SK-N-SH (cell line): ENCODE measurements at regions of chr10 and their contacts with region 1.

Region 1: DNA sequence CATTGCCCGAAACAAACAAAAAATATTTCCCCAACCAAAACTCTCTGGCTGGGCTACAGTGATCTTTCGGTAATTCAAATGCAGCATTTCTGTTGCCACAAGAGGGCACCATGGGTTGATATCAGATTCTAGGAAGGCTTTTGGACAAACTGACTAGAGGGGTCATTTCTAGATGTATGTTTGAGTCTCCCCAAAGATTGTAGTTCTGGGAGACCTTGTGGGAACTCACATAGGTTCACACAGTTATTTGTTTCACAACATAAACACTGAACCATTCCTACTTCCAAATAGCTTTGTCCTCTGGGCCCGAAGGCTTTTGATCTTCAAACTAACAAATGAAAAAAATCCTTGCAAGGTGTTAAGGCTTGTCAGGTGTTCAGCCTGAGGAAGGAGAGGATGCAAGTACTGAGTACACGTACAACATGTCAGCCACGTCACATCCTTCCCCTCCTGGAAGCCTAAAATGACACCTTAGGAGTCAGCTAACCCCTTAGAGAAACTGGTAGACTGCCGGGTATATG is 37.0 kb upstream of the IL15RA start:
- DNase-seq: peak; percentile 52
- H3K4me3 ChIP-seq: peak overlapping the region in 1 of 2 experiments; percentile 40; a peak in 1 of 4 replicates
- H3K27ac ChIP-seq: no peak overlapping the region
- H3K4me1 ChIP-seq: no peaks in the 10 kb centered on the region; a peak in 1 of 4 replicates
- H3K27me3 ChIP-seq: no peaks in the 10 kb centered on the region; the same call in 1 of the 2 replicates
- CTCF ChIP-seq: peak; percentile 77
- EP300 ChIP-seq: no peak
- RAD21 ChIP-seq: peak; percentile 57

Region 2: GRCh38 chr10:6027929-6028328 is 13.6 kb after region 1 on chr10:
- CTCF ChIA-PET with region 1: interaction called, 16 read pairs
- POLR2A ChIA-PET with region 1: no interaction called
- DNase-seq: no peak
- H3K4me3 ChIP-seq: no peak overlapping the region
- H3K27ac ChIP-seq: no peak overlapping the region
- H3K4me1 ChIP-seq: no peaks in the 10 kb centered on the region
- H3K27me3 ChIP-seq: no peaks in the 10 kb centered on the region; the same call in 1 of the 2 replicates
- CTCF ChIP-seq: no peak
- EP300 ChIP-seq: no peak
- RAD21 ChIP-seq: no peak

Region 3: GRCh38 chr10:6033954-6034353 is 19.7 kb after region 1 on chr10:
- CTCF ChIA-PET with region 1: interaction called, 10 read pairs
- POLR2A ChIA-PET with region 1: no interaction called
- DNase-seq: no peak
- H3K4me3 ChIP-seq: no peak overlapping the region
- H3K27ac ChIP-seq: no peak overlapping the region
- H3K4me1 ChIP-seq: no peaks in the 10 kb centered on the region
- H3K27me3 ChIP-seq: peaks cover 20% of the 10 kb centered on the region; the same call in 1 of the 2 replicates
- CTCF ChIP-seq: no peak
- EP300 ChIP-seq: no peak
- RAD21 ChIP-seq: no peak

Region 4: DNA sequence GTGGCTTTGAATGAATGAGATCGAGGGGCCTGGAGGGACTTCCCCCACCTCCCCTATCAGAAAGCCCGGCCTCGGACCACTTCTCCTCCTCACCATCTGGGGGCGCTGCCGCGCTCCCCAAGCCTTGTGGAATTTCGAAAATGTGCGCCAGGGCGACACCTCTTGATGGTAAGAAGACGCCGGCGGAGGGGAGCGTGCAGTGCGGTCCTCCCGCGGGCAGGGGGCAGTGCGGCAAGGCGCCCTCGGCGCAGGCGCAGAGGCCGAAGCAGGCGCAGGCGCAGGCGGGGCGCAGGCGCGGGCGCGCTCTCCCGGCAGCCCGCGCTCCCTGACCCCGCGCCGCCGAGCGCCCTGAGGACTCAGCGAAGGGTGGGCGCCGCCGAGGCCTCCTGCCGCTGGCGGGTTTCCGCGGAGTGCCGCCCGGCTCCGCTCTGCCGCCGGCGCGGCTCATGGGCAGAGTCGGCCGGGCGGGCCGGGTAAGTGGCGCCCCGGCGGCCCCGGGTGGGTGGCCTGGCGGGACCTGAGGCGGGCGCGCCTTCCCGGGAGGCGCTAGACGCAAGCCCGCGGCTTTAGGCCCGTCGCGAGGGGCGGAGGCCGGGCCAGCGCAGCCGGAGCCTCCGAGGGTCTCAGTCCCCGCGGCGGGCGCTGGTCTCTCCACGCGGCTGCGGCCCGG is 74.6 kb after region 1 on chr10 and contains the start of gene RBM17:
- CTCF ChIA-PET with region 1: interaction called, 17 read pairs
- POLR2A ChIA-PET with region 1: no interaction called
- DNase-seq: peak; percentile 96
- H3K4me3 ChIP-seq: peak within 1 kb of the TSS; percentile 89 to 90
- H3K27ac ChIP-seq: peak within 1 kb of the TSS; percentile 36 to 63; a peak in 3 of 4 replicates
- H3K4me1 ChIP-seq: peaks cover 13% of the 10 kb centered on the region in 2 experiments; a peak in 3 of 4 replicates
- H3K27me3 ChIP-seq: 0 out of 2 replicates have a peak, but pooled peaks cover 6% of the 10 kb centered on the region
- CTCF ChIP-seq: peak; percentile 100
- EP300 ChIP-seq: no peak
- RAD21 ChIP-seq: peak; percentile 62
- polyA plus RNA-seq, gene RBM17: 32.6 and 34.2 TPM in 2 replicates